ENCODE measurements at regions of chr14 and their contacts with region 1.

Region 1: GRCh38 chr14:75660630-75661494 is at the starts of genes ERG28 and TTLL5:
- DNase-seq: peak; percentile 98
- H3K4me3 Mint-ChIP-seq: peak within 1 kb of the TSS; percentile 98
- H3K27ac Mint-ChIP-seq: peak within 1 kb of the TSS; percentile 93
- H3K4me1 Mint-ChIP-seq: peaks cover 29% of the 10 kb centered on the region
- H3K27me3 Mint-ChIP-seq: no peaks in the 10 kb centered on the region
- total RNA-seq, gene ERG28: 20.3 and 21.6 TPM in 2 replicates
- total RNA-seq, gene TTLL5: 28.8 and 29.6 TPM in 2 replicates

Region 2: DNA sequence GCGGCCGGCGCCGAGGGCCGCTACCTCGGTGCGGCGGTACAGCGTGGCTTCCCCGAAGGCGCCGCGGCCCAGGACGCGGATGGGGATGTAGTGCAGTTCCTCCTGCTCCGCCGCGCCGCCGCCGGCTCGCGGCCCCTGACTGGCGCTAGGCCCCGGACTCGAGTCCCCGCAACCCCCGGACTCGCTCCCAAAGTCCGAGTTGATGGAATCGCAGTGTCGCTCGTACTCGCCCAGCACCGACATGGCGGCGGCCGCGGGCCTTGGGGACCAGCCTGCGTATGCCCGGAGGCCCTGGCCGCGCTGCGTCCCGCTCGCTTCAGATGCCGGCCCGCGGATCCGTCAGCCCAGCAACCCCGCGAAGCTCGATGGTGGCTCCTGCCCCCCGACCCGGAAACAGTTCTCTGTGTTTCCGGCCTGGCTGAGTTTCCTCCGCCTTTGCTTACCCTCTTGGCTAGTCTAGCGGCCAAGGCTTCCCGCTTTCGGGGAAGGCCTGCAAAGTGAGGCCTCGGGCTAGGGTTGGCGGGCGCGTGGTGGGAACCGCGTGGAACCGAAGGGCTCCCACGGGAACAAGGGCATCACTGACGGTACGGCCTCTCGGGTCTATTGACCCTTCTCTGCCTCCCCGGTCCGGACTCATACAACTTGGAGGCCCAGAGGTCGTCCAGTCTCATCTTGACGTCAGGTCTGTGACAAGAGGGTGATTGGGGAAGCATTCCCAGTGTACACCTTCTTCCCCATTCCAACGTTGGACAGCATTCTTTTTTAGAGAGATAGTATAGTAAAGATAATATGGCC is 534.0 kb before region 1 on chr14 and contains the start of gene NEK9:
- intact Hi-C with region 1: loop called (anchors 5 kb)
- DNase-seq: peak; percentile 85
- H3K4me3 Mint-ChIP-seq: peak within 1 kb of the TSS; percentile 98
- H3K27ac Mint-ChIP-seq: peak within 1 kb of the TSS; percentile 96
- H3K4me1 Mint-ChIP-seq: peaks cover 39% of the 10 kb centered on the region
- H3K27me3 Mint-ChIP-seq: no peaks in the 10 kb centered on the region
- total RNA-seq, gene NEK9: 58.1 and 69.8 TPM in 2 replicates